Activated CD4-positive, alpha-beta T cell treated with anti-CD3 and anti-CD28 coated beads for 36 hours (primary cell): ENCODE measurements at regions of chr11 and their contacts with region 1.

Region 1: DNA sequence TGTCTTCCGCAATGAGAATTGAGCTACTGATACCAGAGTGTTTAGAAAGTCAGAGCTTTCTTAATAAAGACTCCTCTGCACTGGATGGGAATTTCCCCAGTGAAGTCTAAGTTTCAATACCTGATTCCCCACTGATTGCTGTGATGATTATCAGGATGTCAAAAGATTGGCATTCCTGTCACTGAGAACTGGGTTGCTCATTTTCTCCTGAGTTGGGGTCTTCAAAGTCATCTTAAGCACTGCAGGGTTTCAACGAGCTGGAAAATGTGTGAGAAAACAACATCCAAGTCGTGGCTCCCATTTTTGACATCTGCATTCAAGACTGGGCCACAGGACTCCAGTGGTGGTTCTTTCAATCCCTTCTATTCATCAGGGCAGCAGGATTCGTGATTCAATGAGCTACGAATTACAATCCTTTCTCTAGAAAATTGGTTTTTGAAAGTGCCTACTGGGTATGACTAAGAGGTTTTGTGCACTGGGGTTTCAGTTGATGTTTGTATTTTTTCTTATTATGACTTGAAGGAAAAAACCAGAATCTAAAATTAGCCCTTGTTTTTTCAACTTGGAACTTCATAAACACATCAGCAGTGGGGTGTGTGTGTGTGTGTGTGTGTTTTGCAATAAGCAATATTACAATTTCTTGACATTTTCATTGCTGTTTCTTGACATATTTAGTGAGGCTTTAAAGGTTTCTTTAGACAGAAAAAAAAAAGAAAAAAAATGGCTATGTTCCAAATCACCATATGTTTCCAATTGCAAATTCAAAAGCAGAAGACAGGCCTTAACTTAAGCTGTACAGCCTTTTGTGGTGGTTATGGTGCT is 233.0 kb downstream of the FAM76B start:
- DNase-seq: peak; percentile 60
- ATAC-seq: peak; percentile 94
- H3K4me3 Mint-ChIP-seq: peak overlapping the region; percentile 17
- H3K27ac Mint-ChIP-seq: peak overlapping the region; percentile 90
- H3K4me1 Mint-ChIP-seq: peaks cover 23% of the 10 kb centered on the region
- H3K27me3 Mint-ChIP-seq: no peaks in the 10 kb centered on the region

Region 2: DNA sequence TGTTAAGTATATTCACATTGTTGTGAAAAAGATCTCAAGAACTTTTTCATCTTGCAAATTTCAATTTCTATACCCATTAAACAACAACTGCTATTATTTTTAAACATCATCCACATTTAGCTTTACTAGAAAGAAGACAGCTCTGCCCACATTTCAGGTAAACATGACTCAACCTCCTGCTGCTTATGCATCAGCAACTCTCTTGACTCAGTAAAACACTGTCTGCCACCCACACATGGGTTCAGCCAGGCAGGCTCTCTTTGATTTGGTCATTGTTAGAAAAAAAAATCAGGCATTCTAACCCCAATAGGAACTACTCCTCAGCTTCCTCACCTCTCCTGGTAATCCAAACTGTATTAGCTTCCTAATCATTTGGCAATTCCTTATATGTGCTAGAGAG is 472.0 kb before region 1 on chr11:
- CTCF ChIA-PET with region 1: no interaction called
- POLR2A ChIA-PET with region 1: interaction called, 3 read pairs
- intact Hi-C with region 1: loop called in 1 of 2 experiments (anchors 1 kb)
- DNase-seq: peak; percentile 83
- ATAC-seq: peak; percentile 82
- H3K4me3 Mint-ChIP-seq: no peak overlapping the region
- H3K27ac Mint-ChIP-seq: peak overlapping the region; percentile 87
- H3K4me1 Mint-ChIP-seq: peaks cover 42% of the 10 kb centered on the region
- H3K27me3 Mint-ChIP-seq: no peaks in the 10 kb centered on the region

Region 3: GRCh38 chr11:95577716-95578460 is 21.3 kb after region 1 on chr11:
- CTCF ChIA-PET with region 1: no interaction called
- POLR2A ChIA-PET with region 1: no interaction called
- intact Hi-C with region 1: loop called in 1 of 2 experiments (anchors 2 kb)
- DNase-seq: peak; percentile 21
- ATAC-seq: peak; percentile 98
- H3K4me3 Mint-ChIP-seq: no peak overlapping the region
- H3K27ac Mint-ChIP-seq: peak overlapping the region; percentile 10
- H3K4me1 Mint-ChIP-seq: peaks cover 10% of the 10 kb centered on the region
- H3K27me3 Mint-ChIP-seq: no peaks in the 10 kb centered on the region

Region 4: GRCh38 chr11:95680169-95680929 is 123.8 kb after region 1 on chr11:
- CTCF ChIA-PET with region 1: no interaction called
- POLR2A ChIA-PET with region 1: interaction called, 3 read pairs
- intact Hi-C with region 1: loop called in 1 of 2 experiments (anchors 1 kb)
- DNase-seq: no peak
- ATAC-seq: peak; percentile 28
- H3K4me3 Mint-ChIP-seq: no peak overlapping the region
- H3K27ac Mint-ChIP-seq: peak overlapping the region; percentile 35
- H3K4me1 Mint-ChIP-seq: peaks cover 81% of the 10 kb centered on the region
- H3K27me3 Mint-ChIP-seq: no peaks in the 10 kb centered on the region

Region 5: GRCh38 chr11:95699631-95700470 is 143.3 kb after region 1 on chr11:
- CTCF ChIA-PET with region 1: interaction called, 22 read pairs
- POLR2A ChIA-PET with region 1: interaction called, 3 read pairs
- intact Hi-C with region 1: loop called (anchors 1 kb)
- DNase-seq: peak; percentile 25
- ATAC-seq: peak; percentile 54
- H3K4me3 Mint-ChIP-seq: peak overlapping the region; percentile 55
- H3K27ac Mint-ChIP-seq: peak overlapping the region; percentile 95
- H3K4me1 Mint-ChIP-seq: peaks cover 58% of the 10 kb centered on the region
- H3K27me3 Mint-ChIP-seq: no peaks in the 10 kb centered on the region